ENCODE measurements at regions of chr9 and their contacts with region 1.

Region 1: DNA sequence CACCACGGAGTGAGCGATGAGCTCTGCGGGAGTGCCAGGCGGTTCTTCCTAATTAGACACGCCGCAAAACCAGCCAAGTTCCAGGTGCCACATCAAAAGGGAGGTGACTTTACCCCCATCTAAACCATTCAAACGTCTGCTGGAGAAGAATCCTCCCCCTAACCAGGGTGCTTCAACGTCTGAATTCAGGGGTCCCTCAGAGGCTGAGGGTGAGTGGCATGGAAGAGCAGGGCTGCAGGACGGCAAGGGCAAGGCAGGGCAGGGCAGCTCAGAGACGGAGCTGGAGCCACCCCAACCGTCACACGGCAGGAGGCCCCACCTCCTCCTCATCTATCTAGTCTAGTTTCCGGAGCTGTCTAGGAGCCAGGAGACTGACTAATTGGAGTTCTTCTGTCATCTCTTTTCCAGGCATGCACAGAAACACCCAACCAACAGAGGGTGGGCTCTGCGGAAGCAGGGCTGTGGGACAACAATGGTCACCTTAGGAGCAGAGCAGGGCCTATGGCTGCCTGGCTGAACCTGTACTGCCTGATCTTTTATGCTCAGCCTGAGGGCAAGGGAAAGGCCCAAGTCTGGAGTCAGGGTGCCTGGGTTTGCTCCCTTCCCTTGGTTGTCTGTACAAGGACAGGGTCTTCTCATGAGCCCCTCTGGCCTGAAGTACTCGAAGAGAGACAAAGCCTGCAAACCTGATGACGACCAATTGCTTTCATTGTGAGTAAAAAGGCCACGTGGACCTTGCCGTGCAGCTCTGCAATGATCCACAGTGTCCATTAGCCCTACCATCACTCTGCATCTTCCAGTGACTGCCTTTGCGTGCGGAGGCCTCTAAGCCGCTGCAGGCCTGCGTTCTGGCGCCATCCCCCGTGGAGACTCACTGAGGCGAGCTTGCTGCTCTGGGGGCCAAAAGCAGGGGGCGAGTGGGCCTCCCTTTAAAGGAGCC is 81.0 kb upstream of the SLC25A51 start:
- DNase-seq: peak in 1 of 4 donors; percentile 41
- ATAC-seq: peak; percentile 15
- H3K4me3 ChIP-seq: no peak overlapping the region
- H3K27ac ChIP-seq: peak overlapping the region in 3 of 4 donors; percentile 39 to 45 (median 43)
- H3K4me1 ChIP-seq: peaks cover 34% of the 10 kb centered on the region
- H3K27me3 ChIP-seq: no peaks in the 10 kb centered on the region
- CTCF ChIP-seq: no peak
- POLR2A ChIP-seq: no peak

Region 2: GRCh38 chr9:37575921-37576721 is 408.8 kb before region 1 on chr9 and contains the start of gene FBXO10:
- intact Hi-C with region 1: no loop called
- DNase-seq: peak; percentile 72 to 83 (median 75)
- ATAC-seq: peak; percentile 92
- H3K4me3 ChIP-seq: peak within 1 kb of the TSS; percentile 54 to 67
- H3K27ac ChIP-seq: peak within 1 kb of the TSS; percentile 75 to 83 (median 78)
- H3K4me1 ChIP-seq: peaks cover 27% of the 10 kb centered on the region
- H3K27me3 ChIP-seq: no peaks in the 10 kb centered on the region
- CTCF ChIP-seq: no peak
- POLR2A ChIP-seq: peak; percentile 54 to 71 (median 54)
- total RNA-seq, gene FBXO10: 13.2 to 15.3 TPM

Region 3: GRCh38 chr9:37920471-37921167 is 64.3 kb before region 1 on chr9:
- intact Hi-C with region 1: loop called (anchors 10 kb)
- DNase-seq: peak in 1 of 4 donors; percentile 28
- ATAC-seq: no peak
- H3K4me3 ChIP-seq: no peak overlapping the region
- H3K27ac ChIP-seq: no peak overlapping the region
- H3K4me1 ChIP-seq: peaks cover 39% of the 10 kb centered on the region
- H3K27me3 ChIP-seq: no peaks in the 10 kb centered on the region
- CTCF ChIP-seq: no peak
- POLR2A ChIP-seq: no peak

Measured in body of pancreas (tissue), 4 donors.